B cell (primary cell): ENCODE measurements at regions of chr11 and their contacts with region 1.

Region 1: GRCh38 chr11:66288671-66289547 is at the start of gene YIF1A:
- DNase-seq: peak; percentile 99
- ATAC-seq: peak; percentile 93
- H3K4me3 ChIP-seq: peak within 1 kb of the TSS; percentile 53 to 92 (median 77)
- H3K4me3 Mint-ChIP-seq: peak within 1 kb of the TSS; percentile 95
- H3K27ac ChIP-seq: peak within 1 kb of the TSS; percentile 65 to 88
- H3K27ac Mint-ChIP-seq: peak within 1 kb of the TSS; percentile 94
- H3K4me1 ChIP-seq: peaks cover 34 to 42% of the 10 kb centered on the region in 2 donors
- H3K4me1 Mint-ChIP-seq: peaks cover 37% of the 10 kb centered on the region
- H3K27me3 ChIP-seq: peaks cover 2 to 33% (median 15%) of the 10 kb centered on the region in 4 experiments
- H3K27me3 Mint-ChIP-seq: peaks cover 12% of the 10 kb centered on the region
- CTCF ChIP-seq: peak; percentile 21
- total RNA-seq, gene YIF1A: 43.9 and 47.6 TPM in 2 replicates

Region 2: DNA sequence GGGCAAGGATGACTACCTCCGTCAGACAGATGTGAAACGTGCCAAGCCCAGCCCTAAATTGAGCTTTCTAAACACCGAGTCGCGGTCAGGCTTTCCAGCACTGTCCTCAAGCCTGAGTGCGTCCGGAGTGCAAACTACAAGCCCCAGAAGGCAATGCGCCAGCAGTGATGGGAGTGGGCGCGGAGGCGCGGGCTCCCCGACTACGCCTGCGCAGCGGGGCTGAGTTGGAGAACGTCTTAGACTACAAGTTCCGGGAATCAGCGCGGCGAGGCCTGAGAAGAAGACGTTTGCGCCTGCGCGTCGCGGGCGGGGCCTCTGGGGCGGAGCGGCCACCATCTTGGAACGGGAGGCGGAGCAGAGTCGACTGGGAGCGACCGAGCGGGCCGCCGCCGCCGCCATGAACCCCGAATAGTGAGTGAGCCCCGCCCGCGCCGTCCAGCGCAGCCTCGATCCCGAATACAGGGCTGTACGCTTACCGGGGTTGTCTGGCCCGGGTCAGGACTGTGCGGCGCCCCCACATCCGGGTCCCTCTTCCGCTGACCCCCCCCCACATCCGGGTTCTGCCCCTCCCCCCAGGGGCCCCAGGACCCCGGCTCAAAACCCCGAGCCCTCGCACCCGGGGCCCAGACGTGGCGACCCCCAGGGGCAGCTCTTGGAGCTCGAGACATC is 20.5 kb before region 1 on chr11 and contains the start of gene RAB1B:
- CTCF ChIA-PET with region 1: interaction called, 4 read pairs
- POLR2A ChIA-PET with region 1: interaction called, 13 read pairs
- intact Hi-C with region 1: loop called (anchors 1 kb)
- DNase-seq: peak; percentile 100
- ATAC-seq: peak; percentile 77
- H3K4me3 ChIP-seq: peak within 1 kb of the TSS; percentile 83 to 100 (median 98)
- H3K4me3 Mint-ChIP-seq: peak within 1 kb of the TSS; percentile 95
- H3K27ac ChIP-seq: peak within 1 kb of the TSS; percentile 81 to 97
- H3K27ac Mint-ChIP-seq: peak within 1 kb of the TSS; percentile 96
- H3K4me1 ChIP-seq: peaks cover 14 to 27% of the 10 kb centered on the region in 2 donors
- H3K4me1 Mint-ChIP-seq: peaks cover 29% of the 10 kb centered on the region
- H3K27me3 ChIP-seq: no peaks in the 10 kb centered on the region
- H3K27me3 Mint-ChIP-seq: no peaks in the 10 kb centered on the region
- CTCF ChIP-seq: no peak
- total RNA-seq, gene RAB1B: 76.0 and 77.8 TPM in 2 replicates

Region 3: DNA sequence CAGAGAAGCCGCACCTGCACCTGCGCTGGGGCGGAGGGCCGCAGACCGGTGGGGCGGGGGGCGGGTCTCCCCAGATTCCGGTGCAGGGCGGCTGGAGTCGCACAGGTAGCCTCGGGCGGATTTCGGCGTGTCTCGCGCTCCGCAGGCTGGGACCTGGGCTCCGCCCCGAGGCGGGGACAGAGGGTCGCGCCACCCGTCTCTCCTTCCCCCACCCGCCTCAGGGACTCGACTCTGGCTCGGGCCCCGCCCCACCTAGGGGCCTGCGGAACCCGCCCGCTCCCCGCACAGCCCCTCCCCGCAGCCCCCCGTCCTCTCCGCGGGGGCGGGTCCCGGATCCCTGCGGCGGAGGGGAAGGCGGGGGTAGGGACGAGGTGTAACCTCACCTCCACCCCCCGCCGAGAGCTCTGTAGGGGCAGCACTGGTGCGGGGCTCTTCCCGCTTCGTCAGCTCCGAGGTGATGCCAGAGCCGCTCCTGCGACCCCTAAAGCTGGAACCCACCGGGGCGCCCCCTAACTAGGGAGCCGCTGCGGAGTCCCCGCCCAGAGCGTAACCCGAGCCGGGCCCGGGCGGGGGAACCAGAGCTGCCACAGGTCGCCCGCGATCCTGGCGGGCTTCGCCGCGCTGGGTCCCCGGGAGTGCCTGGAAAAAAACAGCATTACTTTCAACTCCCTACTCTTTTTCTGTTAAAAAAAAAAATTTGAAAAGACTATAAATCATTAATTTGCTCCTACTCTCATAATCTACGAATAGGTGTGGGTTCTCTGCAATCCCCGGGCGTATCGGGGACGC is 82.9 kb after region 1 on chr11 and contains the start of gene SLC29A2:
- CTCF ChIA-PET with region 1: no interaction called
- POLR2A ChIA-PET with region 1: no interaction called
- intact Hi-C with region 1: loop called (anchors 5 kb)
- DNase-seq: peak; percentile 78
- ATAC-seq: peak; percentile 81
- H3K4me3 ChIP-seq: peak within 1 kb of the TSS; percentile 70 to 84 (median 77)
- H3K4me3 Mint-ChIP-seq: peak within 1 kb of the TSS; percentile 87
- H3K27ac ChIP-seq: peak within 1 kb of the TSS; percentile 76 to 79
- H3K27ac Mint-ChIP-seq: peak within 1 kb of the TSS; percentile 88
- H3K4me1 ChIP-seq: peaks cover 9 to 15% of the 10 kb centered on the region in 2 donors
- H3K4me1 Mint-ChIP-seq: peaks cover 10% of the 10 kb centered on the region
- H3K27me3 ChIP-seq: peaks cover 0 to 3% (median 0%) of the 10 kb centered on the region in 4 experiments
- H3K27me3 Mint-ChIP-seq: peaks cover 3% of the 10 kb centered on the region
- CTCF ChIP-seq: no peak
- total RNA-seq, gene SLC29A2: 18.5 and 20.1 TPM in 2 replicates

Region 4: GRCh38 chr11:66489636-66490035 is 200.7 kb after region 1 on chr11:
- CTCF ChIA-PET with region 1: no interaction called
- POLR2A ChIA-PET with region 1: no interaction called
- intact Hi-C with region 1: no loop called
- DNase-seq: no peak
- ATAC-seq: no peak
- H3K4me3 ChIP-seq: no peak overlapping the region
- H3K4me3 Mint-ChIP-seq: no peak overlapping the region
- H3K27ac ChIP-seq: no peak overlapping the region
- H3K27ac Mint-ChIP-seq: no peak overlapping the region
- H3K4me1 ChIP-seq: no peaks in the 10 kb centered on the region
- H3K4me1 Mint-ChIP-seq: no peaks in the 10 kb centered on the region
- H3K27me3 ChIP-seq: no peaks in the 10 kb centered on the region
- H3K27me3 Mint-ChIP-seq: no peaks in the 10 kb centered on the region
- CTCF ChIP-seq: no peak